AG04450 (cell line): ENCODE measurements at regions of chr2 and their contacts with region 1.

Region 1: GRCh38 chr2:95121407-95122196 is at the start of gene MRPS5:
- DNase-seq: peak; percentile 3
- H3K4me3 ChIP-seq: peak within 1 kb of the TSS; percentile 99
- H3K27ac ChIP-seq: peak within 1 kb of the TSS; percentile 77
- H3K27me3 ChIP-seq: no peaks in the 10 kb centered on the region
- CTCF ChIP-seq: 0 out of 2 replicates have a peak, but pooled peaks have one; percentile 10
- polyA plus RNA-seq, gene MRPS5: 50.2 and 55.7 TPM in 2 replicates

Region 2: DNA sequence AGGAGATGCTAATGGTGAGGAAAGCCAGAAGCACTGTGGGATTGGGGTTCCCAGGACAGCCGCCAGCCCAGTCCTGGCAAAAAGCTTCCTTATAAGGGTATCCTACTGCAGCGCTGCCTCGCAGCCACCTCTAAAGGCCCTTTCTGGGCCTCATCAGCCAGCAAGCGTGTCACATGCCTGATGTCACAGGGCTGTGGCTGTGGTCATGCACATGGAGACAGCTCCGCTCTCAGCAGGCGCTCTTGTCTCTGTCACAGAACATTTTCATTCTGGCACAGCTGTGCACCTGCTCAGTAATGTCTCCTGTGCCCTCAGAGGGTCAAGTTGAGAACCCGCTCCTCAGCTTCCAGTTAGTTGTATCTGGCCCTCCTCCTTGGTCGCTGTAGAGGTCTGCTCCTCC is 113.8 kb before region 1 on chr2:
- CTCF ChIA-PET with region 1: no interaction called
- POLR2A ChIA-PET with region 1: no interaction called
- DNase-seq: no peak
- H3K4me3 ChIP-seq: no peak overlapping the region
- H3K27ac ChIP-seq: no peak overlapping the region
- H3K27me3 ChIP-seq: peaks cover 6% of the 10 kb centered on the region
- CTCF ChIP-seq: no peak

Region 3: GRCh38 chr2:95159690-95160449 is 38.3 kb after region 1 on chr2 and contains the start of gene ZNF514:
- CTCF ChIA-PET with region 1: no interaction called
- POLR2A ChIA-PET with region 1: interaction called, 10 read pairs
- DNase-seq: peak; percentile 23
- H3K4me3 ChIP-seq: peak within 1 kb of the TSS; percentile 76
- H3K27ac ChIP-seq: peak within 1 kb of the TSS; percentile 21
- H3K27me3 ChIP-seq: no peaks in the 10 kb centered on the region
- CTCF ChIP-seq: no peak
- polyA plus RNA-seq, gene ZNF514: 7.8 and 9.8 TPM in 2 replicates

Region 4: DNA sequence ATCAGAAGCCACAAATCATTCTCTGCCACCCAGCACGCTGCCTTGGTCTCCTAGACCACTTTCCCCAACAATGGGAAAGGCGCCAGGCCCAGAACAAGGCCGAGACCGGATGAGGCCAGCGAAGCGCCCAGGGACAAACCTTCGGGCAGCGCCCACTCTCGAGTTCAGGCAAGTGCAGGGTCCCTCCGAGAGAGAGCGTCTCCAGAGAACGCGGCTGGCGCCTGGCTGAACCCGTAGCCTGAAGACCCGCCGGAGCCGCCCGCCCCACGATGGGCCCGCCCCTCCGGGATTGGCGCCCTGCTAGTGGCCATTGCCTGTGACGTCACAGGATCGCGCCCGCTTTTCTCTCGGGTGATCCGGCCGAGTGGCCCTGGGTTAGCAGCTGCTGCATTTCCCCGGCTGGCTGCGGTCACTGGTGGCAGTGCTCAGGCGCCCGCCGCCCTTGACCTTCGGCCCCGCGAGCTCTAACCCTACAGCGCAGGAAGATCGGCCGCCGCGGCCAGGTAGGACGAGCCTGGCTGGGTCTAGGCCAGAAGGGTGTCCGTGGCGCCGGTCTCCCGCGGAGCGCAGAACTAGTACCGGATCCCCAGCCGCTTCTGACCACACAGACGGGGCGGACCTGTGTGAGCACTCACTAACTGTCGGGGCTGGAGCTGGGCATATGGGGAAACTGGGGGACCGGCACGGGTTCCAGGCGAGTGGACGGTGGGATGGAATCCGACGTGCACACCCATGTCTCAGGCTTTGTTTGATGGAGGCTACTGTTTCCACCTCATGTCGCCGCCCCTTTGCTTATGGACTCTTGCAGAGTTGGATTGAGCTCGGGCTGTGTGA is 281.0 kb after region 1 on chr2 and contains the start of gene FAHD2A:
- CTCF ChIA-PET with region 1: no interaction called
- POLR2A ChIA-PET with region 1: no interaction called
- DNase-seq: peak; percentile 52
- H3K4me3 ChIP-seq: peak within 1 kb of the TSS; percentile 97
- H3K27ac ChIP-seq: peak within 1 kb of the TSS; percentile 65
- H3K27me3 ChIP-seq: no peaks in the 10 kb centered on the region
- CTCF ChIP-seq: no peak
- polyA plus RNA-seq, gene FAHD2A: 24.9 and 30.9 TPM in 2 replicates